ENCODE measurements at regions of chr5 and their contacts with region 1.

Region 1: GRCh38 chr5:65925601-65926275 is 637 bp upstream of the ERBIN start:
- DNase-seq: peak; percentile 77
- H3K4me3 Mint-ChIP-seq: peak overlapping the region; percentile 82
- H3K27ac Mint-ChIP-seq: peak overlapping the region; percentile 92
- H3K4me1 Mint-ChIP-seq: peaks cover 26% of the 10 kb centered on the region
- H3K27me3 Mint-ChIP-seq: no peaks in the 10 kb centered on the region

Region 2: DNA sequence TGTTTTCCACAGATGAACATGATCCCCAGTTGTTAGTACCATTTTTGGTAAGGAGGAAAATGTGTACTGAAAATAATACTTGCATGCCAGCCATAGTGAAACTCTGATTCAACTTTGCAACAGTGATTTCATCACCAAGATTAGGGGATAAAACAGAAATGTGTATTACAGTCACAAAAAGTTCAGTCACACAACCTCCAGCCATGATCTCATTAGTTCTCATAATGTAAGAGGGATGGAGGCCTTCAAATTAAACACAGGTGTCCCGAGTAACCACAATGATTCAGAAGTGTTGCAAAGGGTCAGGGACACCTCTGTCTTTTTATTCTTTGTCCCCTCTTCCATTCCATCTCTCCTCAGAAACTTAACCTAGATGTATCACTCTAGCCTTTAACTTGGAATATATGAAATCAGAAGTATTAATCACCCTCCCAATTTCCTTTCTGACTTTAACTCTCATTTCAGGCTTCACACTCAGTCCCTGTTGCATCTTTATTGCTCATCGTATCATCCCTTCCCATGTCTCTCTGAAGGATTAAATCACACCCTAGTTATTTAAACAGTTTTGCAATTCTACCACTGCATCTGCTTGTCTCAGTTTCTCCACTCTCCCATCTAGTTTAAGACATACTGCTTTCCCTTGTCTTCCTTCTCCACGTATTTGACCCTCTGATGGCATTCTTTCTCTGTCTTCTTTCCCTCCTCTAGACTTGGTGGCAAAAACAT is 735.2 kb before region 1 on chr5:
- CTCF ChIA-PET with region 1: no interaction called
- intact Hi-C with region 1: loop called (anchors 2 kb)
- DNase-seq: peak; percentile 35
- H3K4me3 Mint-ChIP-seq: no peak overlapping the region
- H3K27ac Mint-ChIP-seq: peak overlapping the region; percentile 65
- H3K4me1 Mint-ChIP-seq: peaks cover 14% of the 10 kb centered on the region
- H3K27me3 Mint-ChIP-seq: peaks cover 9% of the 10 kb centered on the region

Region 3: GRCh38 chr5:65624571-65625555 is 300.9 kb before region 1 on chr5 and contains the starts of genes SHLD3 and TRAPPC13:
- CTCF ChIA-PET with region 1: interaction called, 4 read pairs
- intact Hi-C with region 1: loop called (anchors 1 kb)
- DNase-seq: peak; percentile 88
- H3K4me3 Mint-ChIP-seq: peak within 1 kb of the TSS; percentile 99
- H3K27ac Mint-ChIP-seq: peak within 1 kb of the TSS; percentile 94
- H3K4me1 Mint-ChIP-seq: peaks cover 50% of the 10 kb centered on the region
- H3K27me3 Mint-ChIP-seq: no peaks in the 10 kb centered on the region
- total RNA-seq, gene SHLD3: 2.9 to 3.1 TPM
- total RNA-seq, gene TRAPPC13: 25.7 to 29.0 TPM

Region 4: DNA sequence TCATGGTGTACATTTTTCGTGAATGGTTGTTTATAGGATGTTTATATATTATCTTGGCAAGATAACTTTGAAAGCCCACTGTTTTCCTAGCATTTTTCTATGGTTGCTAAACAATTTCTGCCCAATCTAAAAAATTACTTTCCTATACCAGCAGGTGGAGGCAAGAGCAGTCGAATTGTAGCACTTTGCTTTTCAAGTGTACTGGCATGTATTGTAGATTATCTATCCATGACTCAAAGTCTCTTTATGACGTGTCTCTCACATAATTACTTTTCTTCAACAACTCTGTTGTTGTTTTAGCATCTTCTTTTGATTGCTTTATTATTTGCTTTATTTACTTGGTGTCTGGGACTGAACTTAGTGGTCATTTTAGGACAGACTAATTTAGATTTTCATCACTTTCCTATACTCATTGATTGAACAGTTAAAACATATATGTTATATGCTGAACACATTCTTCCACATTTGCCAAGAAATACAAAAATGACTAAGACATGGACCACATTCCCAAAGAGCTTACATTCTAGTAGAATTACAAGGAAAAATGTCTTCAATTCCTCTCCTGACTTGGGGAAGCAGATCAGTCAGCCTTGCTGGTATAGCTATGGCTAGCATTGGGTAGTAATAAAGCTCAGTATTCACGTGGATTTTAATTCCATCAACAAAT is 183.0 kb before region 1 on chr5:
- CTCF ChIA-PET with region 1: interaction called, 3 read pairs
- intact Hi-C with region 1: loop called (anchors 5 kb)
- DNase-seq: peak; percentile 49
- H3K4me3 Mint-ChIP-seq: no peak overlapping the region
- H3K27ac Mint-ChIP-seq: no peak overlapping the region
- H3K4me1 Mint-ChIP-seq: peaks cover 13% of the 10 kb centered on the region
- H3K27me3 Mint-ChIP-seq: no peaks in the 10 kb centered on the region

Region 5: DNA sequence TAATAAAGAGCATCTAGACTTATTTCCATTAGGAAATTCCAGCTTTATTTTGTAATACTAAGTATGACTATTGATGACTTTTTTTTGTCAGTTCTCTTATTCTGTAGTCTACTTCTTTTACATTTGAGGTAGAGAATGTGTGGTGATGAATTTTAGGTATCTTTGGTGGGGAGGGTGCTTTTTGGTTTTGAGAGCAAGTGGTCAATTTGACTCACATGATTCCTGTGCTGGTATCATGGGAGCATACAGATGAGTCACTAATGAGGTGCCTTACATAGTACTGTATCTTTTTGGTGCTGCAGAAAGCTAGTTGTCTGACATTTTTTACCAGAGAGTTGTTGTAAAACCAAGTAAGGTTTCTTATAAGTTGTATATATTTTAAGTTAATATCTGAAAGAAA is 35.9 kb after region 1 on chr5:
- CTCF ChIA-PET with region 1: no interaction called
- intact Hi-C with region 1: loop called (anchors 1 kb)
- DNase-seq: peak; percentile 27
- H3K4me3 Mint-ChIP-seq: no peak overlapping the region
- H3K27ac Mint-ChIP-seq: no peak overlapping the region
- H3K4me1 Mint-ChIP-seq: peaks cover 61% of the 10 kb centered on the region
- H3K27me3 Mint-ChIP-seq: no peaks in the 10 kb centered on the region

Region 6: DNA sequence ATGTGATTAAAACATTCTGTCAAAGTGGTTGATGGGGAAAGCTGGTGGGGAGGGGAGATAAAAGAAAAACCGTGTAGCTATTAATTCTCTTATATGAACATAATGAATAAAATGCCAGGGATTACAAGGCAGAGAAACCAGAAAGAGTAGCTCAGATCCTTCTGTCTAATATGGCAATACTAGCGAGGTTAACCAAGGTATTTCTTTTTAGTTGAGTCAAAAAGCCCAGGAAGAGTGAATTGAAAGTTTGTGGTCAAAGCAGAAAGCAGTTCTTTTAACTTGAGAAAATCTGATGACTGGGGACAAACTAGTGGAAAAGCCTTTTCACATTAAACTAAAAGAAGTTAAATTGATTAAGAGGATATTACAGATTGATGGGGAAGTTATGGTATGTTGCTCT is 76.7 kb after region 1 on chr5:
- CTCF ChIA-PET with region 1: interaction called, 3 read pairs
- intact Hi-C with region 1: loop called (anchors 1 kb)
- DNase-seq: no peak
- H3K4me3 Mint-ChIP-seq: no peak overlapping the region
- H3K27ac Mint-ChIP-seq: no peak overlapping the region
- H3K4me1 Mint-ChIP-seq: peaks cover 33% of the 10 kb centered on the region
- H3K27me3 Mint-ChIP-seq: no peaks in the 10 kb centered on the region

Region 7: DNA sequence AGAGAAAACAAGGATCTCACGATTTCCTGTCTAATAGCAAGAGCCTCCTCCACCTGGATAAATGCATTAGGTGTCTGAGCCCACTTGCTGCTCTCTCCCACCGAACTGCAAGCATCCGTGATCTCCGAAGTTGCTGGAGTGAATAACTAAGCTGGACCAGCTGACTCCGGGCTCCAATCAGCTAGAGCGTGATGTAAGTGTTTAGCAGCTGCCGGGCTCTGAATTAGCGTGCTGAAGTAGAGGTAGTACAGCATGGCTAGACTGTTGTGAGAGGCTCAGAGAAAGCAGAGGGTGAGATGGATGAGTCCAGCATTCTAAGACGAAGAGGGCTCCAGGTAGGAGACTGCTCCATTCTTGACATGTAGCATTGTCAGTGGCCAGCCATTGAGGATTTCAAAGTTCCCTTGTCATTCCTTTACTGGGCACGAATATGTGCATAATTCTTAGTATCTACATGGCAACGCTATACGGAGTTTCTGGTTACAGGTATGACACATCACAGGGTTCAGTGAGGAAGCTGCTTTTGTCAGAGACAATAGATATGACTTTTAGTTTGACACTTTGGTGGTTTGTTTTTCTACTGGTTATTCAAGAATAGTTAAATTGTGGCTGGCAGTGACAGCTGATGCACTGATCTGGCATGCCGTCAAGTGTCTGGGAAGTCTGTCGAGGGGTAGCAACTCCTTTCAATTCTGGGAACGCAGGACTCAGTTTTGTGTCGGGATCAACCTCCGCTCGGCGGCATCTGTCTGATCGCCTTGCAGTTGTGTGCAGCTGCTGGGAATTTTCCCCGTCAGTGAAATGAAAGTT is 903.0 kb after region 1 on chr5:
- CTCF ChIA-PET with region 1: no interaction called
- intact Hi-C with region 1: loop called (anchors 5 kb)
- DNase-seq: peak; percentile 84
- H3K4me3 Mint-ChIP-seq: peak overlapping the region; percentile 87
- H3K27ac Mint-ChIP-seq: peak overlapping the region; percentile 84
- H3K4me1 Mint-ChIP-seq: peaks cover 24% of the 10 kb centered on the region
- H3K27me3 Mint-ChIP-seq: peaks cover 29% of the 10 kb centered on the region

Measured in activated naive CD4-positive, alpha-beta T cell treated with anti-CD3 and anti-CD28 coated beads for 36 hours (primary cell).